Common myeloid progenitor, CD34-positive (primary cell): ENCODE measurements at regions of chr18 and their contacts with region 1.

Region 1: DNA sequence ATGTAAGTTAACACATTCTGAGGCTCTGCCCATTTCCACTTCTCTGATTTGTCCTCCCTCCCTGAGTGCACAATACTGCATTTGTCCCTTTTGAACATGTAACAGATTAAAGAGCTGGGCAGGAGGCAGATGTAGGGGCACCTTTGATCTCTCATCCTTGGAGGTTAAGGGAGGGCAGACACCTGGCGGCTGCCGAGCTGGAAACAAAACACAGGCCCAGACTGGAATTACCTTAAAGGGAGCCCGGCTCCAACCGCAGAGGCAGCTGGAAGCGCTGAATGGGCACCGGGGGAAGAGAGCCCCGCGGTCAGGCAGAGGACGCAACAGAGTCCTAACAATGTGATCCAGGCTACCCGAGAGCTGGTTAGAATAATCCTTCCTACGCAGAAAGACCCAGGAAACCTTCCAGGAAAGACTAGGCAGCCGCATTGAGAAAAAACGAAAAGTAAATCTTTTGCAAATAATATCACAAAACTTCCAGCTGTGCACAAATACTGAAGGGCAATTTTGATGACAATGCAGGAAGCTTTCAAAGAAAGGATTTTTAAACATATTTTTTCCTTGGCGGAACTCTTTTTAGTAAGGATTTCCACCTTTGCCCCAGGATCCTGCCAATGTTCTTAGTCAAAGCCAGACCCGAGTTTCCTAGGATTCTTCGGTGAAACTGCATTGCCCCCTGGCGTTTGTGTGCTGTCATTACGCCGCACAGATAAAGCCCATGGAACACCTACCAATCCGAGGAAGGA is 216.0 kb downstream of the TGIF1 start:
- DNase-seq: peak; percentile 78 to 86 (median 81)
- H3K4me3 ChIP-seq: peak overlapping the region in 3 of 7 experiments; percentile 30 to 65 (median 38)
- H3K27ac ChIP-seq: peak overlapping the region in 1 of 2 experiments; percentile 67
- H3K4me1 ChIP-seq: peaks cover 10 to 32% (median 27%) of the 10 kb centered on the region in 4 experiments
- H3K27me3 ChIP-seq: no peaks in the 10 kb centered on the region

Region 2: DNA sequence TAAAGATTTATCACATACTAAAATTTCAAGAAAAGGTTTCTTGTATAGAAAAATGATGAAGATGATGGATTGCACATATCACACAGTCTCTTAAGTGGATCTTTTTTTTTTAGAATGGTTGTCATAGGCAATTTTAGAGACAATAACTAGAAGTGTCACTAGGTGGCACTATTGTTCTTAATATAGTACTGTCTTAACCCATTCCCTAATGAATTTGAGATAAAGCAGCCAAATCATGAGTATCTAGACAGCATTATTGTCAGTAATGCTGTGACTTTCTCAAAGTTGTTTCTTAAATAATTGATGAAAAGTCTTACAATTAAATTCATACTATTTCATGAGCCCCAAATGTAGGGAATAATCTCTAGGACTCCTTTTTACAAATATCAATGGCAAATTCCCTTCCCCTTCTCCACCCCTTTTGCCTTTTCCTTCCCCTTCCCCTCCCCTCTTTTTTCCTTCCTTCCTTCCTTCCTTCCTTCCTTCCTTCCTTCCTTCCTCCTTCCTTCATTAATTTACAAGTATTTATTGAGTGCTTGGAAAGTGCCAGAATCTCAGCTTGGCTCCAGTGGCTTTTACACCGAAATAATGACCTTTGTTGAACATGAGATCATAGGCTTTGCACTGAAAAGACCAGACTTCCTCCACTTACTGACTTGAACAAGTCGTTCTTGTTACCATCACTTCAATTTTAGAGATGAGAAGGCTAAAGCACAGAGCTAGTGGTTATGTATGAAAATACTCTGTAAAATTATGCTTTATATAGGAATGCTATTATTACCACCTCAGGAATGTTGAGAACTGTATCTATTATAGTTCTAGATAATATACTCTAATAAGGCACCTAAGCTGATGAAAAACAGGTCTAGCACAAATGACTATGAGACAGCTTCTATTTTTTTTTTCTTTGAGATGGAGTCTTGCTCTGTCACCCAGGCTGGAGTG is 384.2 kb before region 1 on chr18:
- CTCF ChIA-PET with region 1: interaction called, 140 read pairs
- POLR2A ChIA-PET with region 1: interaction called, 3 read pairs
- DNase-seq: peak; percentile 78 to 90 (median 87)
- H3K4me3 ChIP-seq: no peak overlapping the region
- H3K27ac ChIP-seq: no peak overlapping the region
- H3K4me1 ChIP-seq: no peaks in the 10 kb centered on the region
- H3K27me3 ChIP-seq: no peaks in the 10 kb centered on the region

Region 3: GRCh38 chr18:3447895-3448837 is 217.8 kb before region 1 on chr18:
- CTCF ChIA-PET with region 1: interaction called, 48 read pairs
- POLR2A ChIA-PET with region 1: interaction called, 3 read pairs
- DNase-seq: peak; percentile 95 to 98 (median 96)
- H3K4me3 ChIP-seq: peak overlapping the region; percentile 42 to 95 (median 86)
- H3K27ac ChIP-seq: peak overlapping the region; percentile 95 to 98
- H3K4me1 ChIP-seq: peaks cover 13 to 62% (median 53%) of the 10 kb centered on the region in 4 experiments
- H3K27me3 ChIP-seq: no peaks in the 10 kb centered on the region

Region 4: DNA sequence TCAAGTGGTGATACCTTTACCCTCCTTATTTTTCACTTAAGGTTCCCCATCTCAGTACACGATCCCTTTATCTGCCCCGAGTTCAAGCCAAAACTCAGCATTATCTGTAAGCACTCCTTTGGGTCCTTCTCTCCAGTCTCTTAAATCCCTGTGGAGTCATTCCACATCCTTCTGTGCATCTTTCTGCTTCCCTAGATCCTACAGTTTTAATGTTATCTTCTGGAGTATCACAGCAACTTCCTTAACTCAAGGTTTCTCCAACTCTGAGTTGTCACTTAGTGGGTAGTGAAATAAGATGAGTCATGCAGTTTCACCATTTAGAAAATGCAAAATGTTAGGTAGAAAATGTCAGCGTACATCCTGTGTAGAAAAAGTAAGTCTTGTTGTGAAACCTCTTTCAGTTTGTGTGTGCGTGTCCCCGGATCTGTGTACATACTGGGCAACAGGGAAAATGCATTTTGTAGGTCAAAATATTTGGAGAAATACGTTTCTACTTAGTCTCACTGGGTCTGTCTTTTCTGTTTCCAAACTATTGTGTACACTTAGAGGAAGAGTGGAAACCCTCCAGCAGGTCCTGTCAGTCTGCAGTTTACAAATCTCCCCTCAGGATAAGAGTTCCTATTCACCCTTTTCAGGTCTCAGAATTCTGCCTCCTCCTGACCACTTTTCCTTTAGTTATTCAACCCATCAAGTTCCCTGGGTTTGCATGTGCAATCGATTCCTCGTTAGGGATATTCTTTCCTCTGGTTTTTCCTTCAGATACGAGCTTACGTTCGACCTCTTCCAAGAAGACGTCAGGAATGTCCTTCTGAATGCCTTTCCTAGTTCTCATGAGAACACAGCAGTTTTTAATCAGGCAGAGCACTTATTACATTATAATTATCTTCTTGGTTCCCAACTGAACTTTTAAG is 61.2 kb before region 1 on chr18:
- CTCF ChIA-PET with region 1: interaction called, 15 read pairs
- POLR2A ChIA-PET with region 1: no interaction called
- DNase-seq: peak in 2 of 3 donors; percentile 89 to 93
- H3K4me3 ChIP-seq: peak overlapping the region in 6 of 7 experiments; percentile 36 to 85 (median 64)
- H3K27ac ChIP-seq: peak overlapping the region; percentile 85 to 95
- H3K4me1 ChIP-seq: peaks cover 30 to 65% (median 52%) of the 10 kb centered on the region in 4 experiments
- H3K27me3 ChIP-seq: no peaks in the 10 kb centered on the region

Region 5: GRCh38 chr18:3683483-3683882 is 17.5 kb after region 1 on chr18:
- CTCF ChIA-PET with region 1: interaction called, 19 read pairs
- POLR2A ChIA-PET with region 1: interaction called, 3 read pairs
- DNase-seq: no peak
- H3K4me3 ChIP-seq: no peak overlapping the region
- H3K27ac ChIP-seq: no peak overlapping the region
- H3K4me1 ChIP-seq: no peaks in the 10 kb centered on the region
- H3K27me3 ChIP-seq: no peaks in the 10 kb centered on the region

Region 6: GRCh38 chr18:3728704-3729437 is 62.9 kb after region 1 on chr18:
- CTCF ChIA-PET with region 1: no interaction called
- POLR2A ChIA-PET with region 1: no interaction called
- DNase-seq: no peak
- H3K4me3 ChIP-seq: no peak overlapping the region
- H3K27ac ChIP-seq: no peak overlapping the region
- H3K4me1 ChIP-seq: peaks cover 7 to 33% (median 14%) of the 10 kb centered on the region in 4 experiments
- H3K27me3 ChIP-seq: no peaks in the 10 kb centered on the region

Region 7: DNA sequence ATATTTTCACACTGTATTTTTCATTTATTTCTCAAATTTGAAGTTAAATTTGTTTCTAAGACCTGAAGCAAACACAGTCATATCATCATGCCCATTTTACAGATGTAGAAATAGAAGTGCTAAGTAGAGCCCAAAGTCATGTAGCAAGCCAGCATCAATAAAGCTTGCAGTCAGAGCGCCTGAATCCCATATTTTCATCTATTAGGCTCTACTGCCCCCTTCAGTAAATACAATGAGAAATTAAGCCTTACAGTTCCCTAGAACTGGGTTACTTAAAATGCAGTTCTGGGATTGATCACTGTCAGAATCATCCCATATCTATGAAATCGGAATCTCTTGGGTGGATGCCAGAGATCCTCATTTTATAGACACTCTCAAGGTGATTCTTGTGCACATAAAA is 203.9 kb after region 1 on chr18:
- CTCF ChIA-PET with region 1: interaction called, 22 read pairs
- POLR2A ChIA-PET with region 1: no interaction called
- DNase-seq: peak; percentile 65 to 77 (median 75)
- H3K4me3 ChIP-seq: no peak overlapping the region
- H3K27ac ChIP-seq: no peak overlapping the region
- H3K4me1 ChIP-seq: peaks cover 0 to 4% (median 1%) of the 10 kb centered on the region in 4 experiments
- H3K27me3 ChIP-seq: peaks cover 0 to 2% (median 0%) of the 10 kb centered on the region in 5 experiments

Region 8: DNA sequence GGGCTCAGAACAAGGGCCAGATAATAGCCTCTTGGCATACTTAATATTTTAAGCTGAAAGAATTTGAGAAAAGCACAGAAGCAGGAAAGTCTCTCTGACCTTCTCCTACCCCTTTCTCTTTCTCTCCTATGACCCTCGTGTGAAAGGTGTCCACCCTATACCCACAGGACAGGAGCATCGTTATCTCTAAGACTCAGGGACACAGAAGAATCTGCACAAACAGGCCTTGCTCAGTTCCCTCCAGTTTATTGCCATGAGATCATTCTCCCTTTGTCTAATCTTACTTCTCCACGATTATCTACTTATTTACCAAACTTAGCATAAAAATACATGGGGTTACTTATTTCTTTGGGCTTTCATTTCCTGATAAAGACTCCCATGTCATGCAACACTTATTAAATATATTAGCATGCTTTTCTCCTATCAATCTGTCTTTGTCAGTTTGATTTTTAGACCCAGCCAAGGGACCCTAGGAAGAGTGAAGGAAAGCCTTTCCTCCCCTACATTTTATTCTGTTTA is 418.5 kb after region 1 on chr18:
- CTCF ChIA-PET with region 1: no interaction called
- POLR2A ChIA-PET with region 1: no interaction called
- DNase-seq: no peak
- H3K4me3 ChIP-seq: no peak overlapping the region
- H3K27ac ChIP-seq: no peak overlapping the region
- H3K4me1 ChIP-seq: peaks cover 0 to 3% (median 0%) of the 10 kb centered on the region in 4 experiments
- H3K27me3 ChIP-seq: no peaks in the 10 kb centered on the region